Activated naive CD4-positive, alpha-beta T cell treated with anti-CD3 and anti-CD28 coated beads, Interleukin-2, amount 10 ng/mL, durations not matched to agents 7 days and 5 days (primary cell): ENCODE measurements at regions of chr10 and their contacts with region 1.

Region 1: GRCh38 chr10:72337020-72337629 is 17.6 kb downstream of the DNAJB12 start:
- DNase-seq: peak; percentile 75
- H3K4me3 Mint-ChIP-seq: no peak overlapping the region
- H3K27ac Mint-ChIP-seq: no peak overlapping the region
- H3K4me1 Mint-ChIP-seq: peaks cover 63% of the 10 kb centered on the region
- H3K27me3 Mint-ChIP-seq: no peaks in the 10 kb centered on the region

Region 2: DNA sequence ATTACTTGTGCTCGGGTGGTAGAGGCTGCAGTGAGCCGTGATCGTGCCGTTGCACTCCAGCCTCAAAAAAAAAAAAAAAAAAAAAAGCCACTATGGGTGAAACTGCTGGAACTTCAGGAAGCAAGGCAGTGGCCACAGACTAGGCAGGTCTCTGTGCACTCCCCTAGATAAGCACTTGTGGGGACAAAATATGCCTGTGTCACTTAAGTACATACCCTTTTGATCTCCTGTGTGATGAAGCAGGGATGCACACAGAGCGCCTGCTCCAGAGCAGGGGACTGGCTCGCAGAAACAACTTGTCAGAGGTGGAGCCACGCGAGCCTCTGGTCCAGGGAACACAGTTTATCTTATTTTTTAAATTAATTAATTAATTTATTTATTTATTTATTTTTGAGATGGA is 443.2 kb before region 1 on chr10:
- CTCF ChIA-PET with region 1: interaction called, 15 read pairs
- DNase-seq: no peak
- H3K4me3 Mint-ChIP-seq: no peak overlapping the region
- H3K27ac Mint-ChIP-seq: no peak overlapping the region
- H3K4me1 Mint-ChIP-seq: peaks cover 20% of the 10 kb centered on the region
- H3K27me3 Mint-ChIP-seq: peaks cover 48% of the 10 kb centered on the region

Region 3: DNA sequence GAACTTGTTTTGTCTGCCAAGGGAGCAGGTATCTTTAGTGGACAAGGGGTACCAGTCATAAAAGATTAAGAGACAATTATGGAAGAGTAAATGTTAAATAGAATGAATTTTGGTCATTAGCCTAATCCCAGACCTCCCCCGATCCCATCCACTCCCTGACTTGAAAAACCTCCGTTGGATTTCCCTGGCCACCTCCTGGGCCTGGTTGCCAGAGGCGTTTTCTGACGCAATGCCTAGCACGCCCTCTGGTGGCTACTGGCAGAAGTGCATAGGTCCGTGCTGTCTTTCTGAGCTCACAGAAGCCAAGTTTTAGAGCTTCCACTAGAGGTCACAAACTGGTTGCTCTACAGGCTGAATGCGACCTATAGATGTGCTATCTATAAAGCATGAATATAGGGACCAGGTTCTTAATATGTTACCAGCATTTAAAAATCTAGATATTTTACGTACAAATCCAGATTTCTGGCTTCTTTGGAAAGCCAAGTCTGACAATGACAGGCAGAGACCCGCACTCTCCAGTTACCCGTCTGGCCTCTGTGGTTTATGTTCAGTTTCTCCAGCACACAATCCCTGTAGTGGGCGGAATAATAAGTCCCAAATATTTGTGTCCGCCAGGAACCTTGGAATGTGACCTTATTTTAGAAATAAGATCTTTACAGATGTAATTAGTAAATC is 288.5 kb before region 1 on chr10:
- CTCF ChIA-PET with region 1: interaction called, 99 read pairs
- DNase-seq: peak; percentile 95
- H3K4me3 Mint-ChIP-seq: no peak overlapping the region
- H3K27ac Mint-ChIP-seq: no peak overlapping the region
- H3K4me1 Mint-ChIP-seq: peaks cover 3% of the 10 kb centered on the region
- H3K27me3 Mint-ChIP-seq: peaks cover 32% of the 10 kb centered on the region

Region 4: GRCh38 chr10:72229261-72230251 is 107.6 kb before region 1 on chr10:
- CTCF ChIA-PET with region 1: interaction called, 37 read pairs
- DNase-seq: no peak
- H3K4me3 Mint-ChIP-seq: no peak overlapping the region
- H3K27ac Mint-ChIP-seq: peak overlapping the region; percentile 64
- H3K4me1 Mint-ChIP-seq: peaks cover 32% of the 10 kb centered on the region
- H3K27me3 Mint-ChIP-seq: no peaks in the 10 kb centered on the region

Region 5: GRCh38 chr10:72254813-72255568 is 82.1 kb before region 1 on chr10:
- CTCF ChIA-PET with region 1: interaction called, 14 read pairs
- DNase-seq: peak; percentile 71
- H3K4me3 Mint-ChIP-seq: peak overlapping the region; percentile 69
- H3K27ac Mint-ChIP-seq: peak overlapping the region; percentile 87
- H3K4me1 Mint-ChIP-seq: peaks cover 81% of the 10 kb centered on the region
- H3K27me3 Mint-ChIP-seq: no peaks in the 10 kb centered on the region